SK-N-SH (cell line): ENCODE measurements at regions of chr3 and their contacts with region 1.

Region 1: GRCh38 chr3:50192689-50193141 is 1.3 kb downstream of the GNAT1 start:
- DNase-seq: peak; percentile 88
- H3K4me3 ChIP-seq: peak overlapping the region in 1 of 2 experiments; percentile 21; a peak in 1 of 4 replicates
- H3K27ac ChIP-seq: no peak overlapping the region
- H3K4me1 ChIP-seq: peaks cover 0 to 19% of the 10 kb centered on the region in 2 experiments; a peak in 1 of 4 replicates
- H3K27me3 ChIP-seq: peaks cover 33% of the 10 kb centered on the region
- CTCF ChIP-seq: peak; percentile 90
- EP300 ChIP-seq: no peak
- RAD21 ChIP-seq: peak; percentile 89

Region 2: GRCh38 chr3:50154840-50155474 is 37.8 kb before region 1 on chr3 and contains the start of gene SEMA3F:
- CTCF ChIA-PET with region 1: interaction called, 15 read pairs
- POLR2A ChIA-PET with region 1: no interaction called
- DNase-seq: peak; percentile 96
- H3K4me3 ChIP-seq: peak within 1 kb of the TSS; percentile 64 to 67
- H3K27ac ChIP-seq: no peak within 1 kb of the TSS; a peak in 1 of 4 replicates
- H3K4me1 ChIP-seq: peaks cover 22 to 48% of the 10 kb centered on the region in 2 experiments; a peak in 2 of 4 replicates
- H3K27me3 ChIP-seq: no peaks in the 10 kb centered on the region
- CTCF ChIP-seq: peak; percentile 13; the same call in 1 of the 2 replicates
- EP300 ChIP-seq: no peak
- RAD21 ChIP-seq: peak; percentile 46; the same call in 1 of the 2 replicates
- polyA plus RNA-seq, gene SEMA3F: 23.9 and 30.4 TPM in 2 replicates

Region 3: DNA sequence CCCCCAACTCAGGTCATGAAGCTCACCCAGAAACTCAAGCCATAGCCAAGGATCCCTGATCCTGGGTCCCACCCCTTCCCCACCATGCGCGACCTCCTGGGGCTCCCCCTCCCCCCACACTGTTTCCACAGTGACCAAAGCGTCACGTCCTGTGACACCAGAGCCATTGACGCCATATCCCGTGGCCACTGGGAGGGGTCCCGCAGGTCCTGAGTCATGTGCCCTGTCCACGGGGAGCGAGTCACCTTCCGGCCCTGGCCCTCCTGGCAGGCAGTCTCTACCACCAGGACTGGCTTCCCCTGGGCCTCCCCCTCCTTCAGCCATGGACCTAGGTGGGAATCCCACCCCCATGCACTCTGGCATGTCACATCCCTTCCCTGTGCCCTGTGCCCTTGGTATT is 22.0 kb before region 1 on chr3:
- CTCF ChIA-PET with region 1: interaction called, 60 read pairs
- POLR2A ChIA-PET with region 1: no interaction called
- DNase-seq: no peak
- H3K4me3 ChIP-seq: no peak overlapping the region
- H3K27ac ChIP-seq: peak overlapping the region in 1 of 2 experiments; percentile 54; a peak in 2 of 4 replicates
- H3K4me1 ChIP-seq: peaks cover 12 to 19% of the 10 kb centered on the region in 2 experiments; a peak in 3 of 4 replicates
- H3K27me3 ChIP-seq: no peaks in the 10 kb centered on the region
- CTCF ChIP-seq: no peak
- EP300 ChIP-seq: no peak
- RAD21 ChIP-seq: no peak